Naive thymus-derived CD8-positive, alpha-beta T cell (primary cell): ENCODE measurements at regions of chr22 and their contacts with region 1.

Region 1: DNA sequence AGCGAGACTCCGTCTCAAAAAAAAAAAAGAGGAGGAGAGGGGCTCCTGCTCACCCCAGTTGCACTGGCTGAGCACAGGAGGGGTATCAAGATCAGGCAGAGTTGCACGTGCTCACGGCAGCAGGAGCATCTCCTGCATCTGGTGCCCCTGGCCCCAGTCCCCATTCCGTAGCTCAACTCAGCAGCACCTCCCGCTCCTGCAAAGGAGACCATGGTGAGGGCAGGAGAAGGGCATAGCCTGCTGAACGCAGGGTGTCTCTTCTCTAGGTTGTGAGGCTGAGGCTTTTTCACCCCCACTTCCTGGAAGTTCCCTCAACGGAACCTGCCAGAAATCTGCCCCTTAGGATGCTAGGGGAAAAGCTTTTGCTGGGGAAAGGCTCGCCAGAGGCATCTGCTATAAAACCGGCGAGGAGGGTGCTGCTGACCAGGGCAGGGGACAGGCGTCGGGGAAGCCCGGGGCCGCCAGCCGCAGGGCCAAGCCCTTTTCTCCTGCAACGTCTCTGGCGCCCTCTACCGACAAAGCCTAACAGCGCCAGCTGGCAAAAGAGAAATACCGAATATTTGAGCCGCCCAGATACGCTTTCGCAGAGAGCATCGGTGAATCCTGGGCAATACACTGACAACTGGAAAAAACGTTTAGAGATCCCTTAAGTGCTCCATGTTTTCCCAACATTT is 1.0 kb upstream of the PPP6R2 start:
- DNase-seq: peak; percentile 72 to 93 (median 87)
- ATAC-seq: peak; percentile 61 to 63
- H3K4me3 Mint-ChIP-seq: peak overlapping the region; percentile 72 to 92 (median 88)
- H3K27ac Mint-ChIP-seq: peak overlapping the region; percentile 74 to 96 (median 94)
- H3K4me1 Mint-ChIP-seq: peaks cover 0 to 12% (median 5%) of the 10 kb centered on the region in 4 donors
- H3K27me3 Mint-ChIP-seq: no peaks in the 10 kb centered on the region

Region 2: DNA sequence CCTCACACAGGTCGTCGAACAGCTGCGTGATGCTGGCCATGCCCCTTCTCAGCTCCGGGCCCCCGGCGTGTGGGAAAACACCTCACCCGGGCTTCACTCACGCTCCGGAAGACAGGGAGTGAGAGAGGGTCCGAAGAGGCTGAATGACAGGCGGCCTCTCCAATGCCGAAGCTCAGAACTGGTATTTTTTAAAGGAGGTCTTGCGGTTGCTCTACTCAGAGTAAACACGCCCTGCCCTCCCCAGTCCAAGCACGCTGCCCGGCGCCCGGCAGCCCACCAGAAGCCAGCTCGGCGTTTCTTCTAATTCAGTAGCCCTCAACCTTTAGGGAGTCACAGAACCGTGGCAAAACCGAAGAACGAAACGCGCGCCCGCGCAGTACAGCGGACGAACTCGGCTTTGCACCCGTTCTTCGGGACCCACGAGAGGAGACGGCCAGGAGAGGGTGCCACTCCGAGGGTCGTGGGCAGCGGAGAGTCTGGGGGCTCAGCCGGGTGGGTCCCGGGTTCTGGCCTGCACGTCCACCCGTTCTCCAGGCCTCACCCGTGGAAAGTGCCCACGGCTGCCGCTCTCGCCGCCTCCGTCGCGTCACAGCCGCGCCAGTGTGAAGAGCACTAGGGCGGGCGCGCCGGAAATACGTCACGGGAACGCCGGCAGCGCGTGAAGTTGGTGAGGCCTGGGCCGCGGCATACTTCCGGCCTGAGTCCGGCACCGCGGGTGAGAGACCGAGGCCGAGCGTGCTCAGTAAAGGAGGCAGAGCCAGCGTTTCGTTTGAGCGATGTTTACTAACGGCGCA is 97.5 kb before region 1 on chr22 and contains the start of gene TUBGCP6:
- POLR2A ChIA-PET with region 1: interaction called, 12 read pairs
- DNase-seq: peak; percentile 83 to 93 (median 90)
- ATAC-seq: peak; percentile 79 to 81
- H3K4me3 Mint-ChIP-seq: peak within 1 kb of the TSS; percentile 85 to 100 (median 99)
- H3K27ac Mint-ChIP-seq: peak within 1 kb of the TSS; percentile 98 to 100 (median 100)
- H3K4me1 Mint-ChIP-seq: peaks cover 11 to 60% (median 31%) of the 10 kb centered on the region in 4 donors
- H3K27me3 Mint-ChIP-seq: no peaks in the 10 kb centered on the region
- polyA plus RNA-seq, gene TUBGCP6: 9.3 to 25.2 (median 17.3) TPM

Region 3: DNA sequence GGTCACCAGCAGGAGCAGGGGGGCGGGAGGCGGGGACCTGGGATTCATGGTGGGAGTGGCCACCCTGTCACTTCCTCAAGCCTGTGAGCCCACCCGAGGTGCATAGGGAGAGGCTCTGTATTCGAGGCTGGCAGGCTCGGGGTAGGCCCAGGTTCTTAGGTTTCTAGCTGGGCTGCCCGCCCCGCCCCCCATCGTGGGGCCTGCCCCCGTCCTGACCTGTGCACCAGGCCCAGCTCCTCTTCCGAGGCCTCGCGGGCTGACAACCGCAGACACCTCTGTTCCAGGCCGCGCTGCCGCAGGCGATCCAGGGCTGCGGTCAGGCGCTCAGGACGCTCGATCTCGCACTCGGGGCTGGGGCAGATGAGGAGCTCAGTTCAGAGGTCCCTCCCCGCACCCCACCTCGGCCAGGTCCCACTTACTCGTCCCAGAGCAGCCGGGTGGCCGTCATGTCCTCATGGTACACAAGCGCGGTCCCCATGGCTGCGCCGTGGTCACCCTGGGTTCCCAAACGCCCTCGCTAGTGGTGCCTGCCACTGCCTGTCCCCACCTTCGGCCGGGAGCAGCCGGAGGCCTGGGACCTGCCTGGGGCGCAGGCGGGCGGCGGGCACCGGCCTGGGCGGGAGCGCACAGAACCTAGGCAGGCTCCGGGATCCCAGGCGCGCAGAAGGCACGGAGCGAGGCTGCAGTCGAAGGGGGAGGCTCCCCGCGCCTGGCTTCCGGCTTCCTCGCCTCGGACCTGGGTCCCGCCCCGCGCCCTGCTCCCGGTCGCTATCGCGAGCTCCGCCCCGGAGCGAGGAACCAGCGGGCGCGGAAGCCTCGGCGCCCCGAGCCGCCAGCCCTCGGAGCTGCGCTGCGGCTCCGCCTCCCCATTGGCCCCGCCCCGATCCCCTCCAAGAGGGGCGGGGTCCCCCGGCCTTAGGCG is 91.3 kb before region 1 on chr22 and contains the start of gene HDAC10:
- POLR2A ChIA-PET with region 1: interaction called, 13 read pairs
- DNase-seq: peak; percentile 59 to 87 (median 71)
- ATAC-seq: peak; percentile 72 to 82
- H3K4me3 Mint-ChIP-seq: peak within 1 kb of the TSS; percentile 60 to 87 (median 77)
- H3K27ac Mint-ChIP-seq: peak within 1 kb of the TSS; percentile 23 to 83 (median 62)
- H3K4me1 Mint-ChIP-seq: peaks cover 0 to 25% (median 7%) of the 10 kb centered on the region in 4 donors
- H3K27me3 Mint-ChIP-seq: no peaks in the 10 kb centered on the region
- polyA plus RNA-seq, gene HDAC10: 5.4 to 7.8 (median 6.4) TPM